BJ (cell line): ENCODE measurements at regions of chr13 and their contacts with region 1.

Region 1: GRCh38 chr13:77337162-77337561 is 10.3 kb upstream of the MYCBP2 start:
- DNase-seq: no peak
- H3K4me3 ChIP-seq: no peak overlapping the region
- H3K27me3 ChIP-seq: no peaks in the 10 kb centered on the region; the same call in 1 of the 2 replicates
- CTCF ChIP-seq: no peak

Region 2: GRCh38 chr13:77480066-77480465 is 142.9 kb after region 1 on chr13:
- CTCF ChIA-PET with region 1: interaction called, 11 read pairs
- POLR2A ChIA-PET with region 1: no interaction called
- DNase-seq: no peak
- H3K4me3 ChIP-seq: no peak overlapping the region
- H3K27me3 ChIP-seq: no peaks in the 10 kb centered on the region; the same call in 1 of the 2 replicates
- CTCF ChIP-seq: no peak